ENCODE measurements at regions of chr1 and their contacts with region 1.

Region 1: GRCh38 chr1:155934097-155934935 is at the start of gene KHDC4:
- DNase-seq: peak; percentile 90 to 96
- H3K4me3 ChIP-seq: peak within 1 kb of the TSS; percentile 84
- H3K27ac ChIP-seq: peak within 1 kb of the TSS; percentile 92
- H3K4me1 ChIP-seq: peaks cover 46% of the 10 kb centered on the region
- H3K27me3 ChIP-seq: no peaks in the 10 kb centered on the region
- CTCF ChIP-seq: no peak
- total RNA-seq, gene KHDC4: 63.4 and 68.8 TPM in 2 replicates

Region 2: DNA sequence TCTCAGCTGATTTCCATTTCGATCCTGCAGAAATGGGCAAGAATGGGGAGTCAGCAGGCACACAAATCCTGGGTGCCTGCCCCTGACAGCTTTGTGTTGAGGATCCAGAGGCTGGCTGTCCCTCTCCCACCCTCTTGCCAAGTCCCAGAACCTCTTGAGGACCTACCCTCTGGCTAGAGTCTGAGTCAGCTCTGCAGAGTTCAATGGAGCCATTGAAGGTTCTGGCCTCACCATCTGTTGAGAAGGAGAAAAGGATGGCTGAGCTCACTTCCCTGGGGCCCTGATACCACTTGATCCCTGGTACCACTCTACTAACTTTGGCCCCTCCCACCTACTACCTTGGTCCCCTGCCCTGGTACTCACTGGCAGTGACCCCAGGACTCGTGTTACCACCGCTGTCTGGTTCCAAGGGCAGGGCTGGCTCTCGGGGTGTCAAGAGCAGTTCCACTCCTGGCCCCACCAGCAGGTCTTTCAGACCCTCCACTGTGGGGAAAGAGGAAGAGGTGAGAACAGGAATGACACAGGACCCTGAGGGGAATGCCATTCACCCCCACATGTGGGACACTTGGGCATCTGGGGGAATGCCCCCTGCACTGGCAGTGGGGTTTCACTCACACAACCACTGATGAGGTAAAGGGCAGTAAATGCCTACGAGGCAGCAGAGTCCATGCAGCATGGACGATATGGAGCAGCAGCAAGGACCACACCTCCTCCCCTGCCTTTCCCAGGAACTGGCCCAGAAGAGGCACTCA is 17.6 kb after region 1 on chr1:
- CTCF ChIA-PET with region 1: no interaction called
- POLR2A ChIA-PET with region 1: interaction called, 23 read pairs
- intact Hi-C with region 1: no loop called
- DNase-seq: no peak
- H3K4me3 ChIP-seq: no peak overlapping the region
- H3K27ac ChIP-seq: no peak overlapping the region
- H3K4me1 ChIP-seq: no peaks in the 10 kb centered on the region
- H3K27me3 ChIP-seq: no peaks in the 10 kb centered on the region
- CTCF ChIP-seq: no peak

Region 3: DNA sequence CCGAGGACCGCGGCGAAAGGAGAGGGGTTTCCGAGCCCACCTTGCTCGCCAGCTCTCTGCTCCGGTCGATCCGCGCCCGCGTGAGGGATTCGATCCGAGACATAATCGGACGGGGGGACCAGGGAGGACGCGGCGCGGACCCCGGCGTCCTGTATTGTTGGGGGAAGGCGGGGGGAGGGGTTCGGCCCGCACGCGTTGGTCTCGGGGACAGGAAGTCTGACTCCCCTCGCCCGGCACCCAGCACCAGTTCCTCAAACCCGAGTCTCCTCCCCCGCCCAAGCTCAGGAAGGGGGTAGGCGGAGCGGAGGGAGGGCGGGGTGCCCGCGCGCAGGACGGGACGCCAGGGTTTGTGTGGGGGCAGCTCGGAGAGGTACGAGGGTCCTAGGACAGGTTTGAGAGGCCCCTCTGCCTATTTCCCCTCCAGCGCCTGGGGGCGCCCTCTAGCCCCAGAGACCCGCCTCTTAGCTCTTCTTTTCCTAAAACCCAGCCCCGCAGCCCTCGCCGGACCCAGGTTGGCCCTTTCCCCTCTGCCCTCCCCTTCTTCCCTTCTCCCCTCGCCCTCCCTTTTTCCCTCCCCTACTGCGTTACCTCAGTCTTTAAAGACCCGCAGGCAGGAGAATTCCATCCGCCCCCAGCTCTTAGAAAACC is 44.1 kb after region 1 on chr1 and contains the start of gene ARHGEF2:
- CTCF ChIA-PET with region 1: no interaction called
- POLR2A ChIA-PET with region 1: interaction called, 14 read pairs
- intact Hi-C with region 1: no loop called
- DNase-seq: peak; percentile 64 to 70
- H3K4me3 ChIP-seq: peak within 1 kb of the TSS; percentile 93
- H3K27ac ChIP-seq: peak within 1 kb of the TSS; percentile 96
- H3K4me1 ChIP-seq: peaks cover 53% of the 10 kb centered on the region
- H3K27me3 ChIP-seq: no peaks in the 10 kb centered on the region
- CTCF ChIP-seq: no peak; the same call in 1 of the 2 replicates
- total RNA-seq, gene ARHGEF2: 85.0 and 93.9 TPM in 2 replicates

Region 4: GRCh38 chr1:155989242-155990004 is 55.1 kb after region 1 on chr1:
- CTCF ChIA-PET with region 1: interaction called, 7 read pairs
- POLR2A ChIA-PET with region 1: interaction called, 29 read pairs
- intact Hi-C with region 1: loop called (anchors 1 kb)
- DNase-seq: peak in 1 of 2 experiments; percentile 70
- H3K4me3 ChIP-seq: no peak overlapping the region
- H3K27ac ChIP-seq: no peak overlapping the region
- H3K4me1 ChIP-seq: peaks cover 16% of the 10 kb centered on the region
- H3K27me3 ChIP-seq: no peaks in the 10 kb centered on the region
- CTCF ChIP-seq: peak; percentile 96

Region 5: DNA sequence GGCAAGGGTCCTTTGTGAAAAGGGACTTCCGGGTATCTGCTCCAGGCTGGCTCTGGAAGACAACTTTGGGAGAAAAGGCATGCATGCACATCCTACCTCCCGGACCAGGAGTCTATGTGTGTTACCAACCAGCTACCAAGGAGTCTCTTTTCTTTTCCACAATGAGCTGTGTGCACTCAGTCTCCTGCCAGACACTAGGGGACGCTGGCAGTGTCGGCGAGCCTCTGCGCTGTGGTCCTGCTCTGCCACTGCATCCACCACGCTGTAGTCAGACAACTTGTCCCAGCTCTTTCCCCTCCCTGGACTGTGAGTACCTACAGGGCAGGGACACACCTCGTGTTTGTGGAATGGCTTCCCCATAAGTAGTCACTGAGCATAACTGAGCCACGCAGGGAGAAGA is 91.6 kb after region 1 on chr1:
- CTCF ChIA-PET with region 1: interaction called, 12 read pairs
- POLR2A ChIA-PET with region 1: no interaction called
- intact Hi-C with region 1: no loop called
- DNase-seq: no peak
- H3K4me3 ChIP-seq: no peak overlapping the region
- H3K27ac ChIP-seq: no peak overlapping the region
- H3K4me1 ChIP-seq: no peaks in the 10 kb centered on the region
- H3K27me3 ChIP-seq: no peaks in the 10 kb centered on the region
- CTCF ChIP-seq: 0 out of 2 replicates have a peak, but pooled peaks have one; percentile 27

Region 6: DNA sequence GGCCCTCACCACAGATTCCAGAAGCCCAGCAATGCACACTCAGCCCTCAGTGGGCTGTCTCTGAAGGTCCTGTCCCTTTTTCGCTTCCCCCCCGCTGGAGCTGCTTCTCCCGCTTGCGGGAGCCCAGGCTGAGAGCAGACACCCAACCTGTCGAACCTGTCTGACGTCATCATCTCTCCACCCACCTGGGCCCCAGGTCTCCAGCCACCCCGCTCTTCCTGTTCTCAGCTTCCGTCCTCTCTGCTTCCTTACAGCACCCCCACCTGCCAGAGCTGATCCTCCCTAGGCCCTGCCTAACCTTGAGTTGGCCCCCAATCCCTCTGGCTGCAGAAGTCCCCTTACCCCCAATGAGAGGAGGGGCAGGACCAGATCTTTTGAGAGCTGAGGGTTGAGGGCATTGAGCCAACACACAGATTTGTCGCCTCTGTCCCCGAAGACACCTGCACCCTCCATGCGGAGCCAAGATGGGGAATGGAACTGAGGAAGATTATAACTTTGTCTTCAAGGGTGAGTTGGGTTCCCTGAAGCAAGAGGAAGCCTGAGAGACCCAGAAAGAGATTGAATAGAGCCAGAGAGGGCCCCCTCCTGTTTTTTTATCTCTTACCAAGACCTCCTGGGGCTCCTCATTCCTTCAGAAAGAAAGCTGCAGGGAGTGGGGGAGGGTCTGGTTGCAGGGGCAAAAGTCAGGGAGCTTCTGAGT is 126.8 kb after region 1 on chr1 and contains the start of gene RAB25:
- CTCF ChIA-PET with region 1: interaction called, 16 read pairs
- POLR2A ChIA-PET with region 1: no interaction called
- intact Hi-C with region 1: loop called (anchors 1 kb)
- DNase-seq: peak; percentile 90 to 92
- H3K4me3 ChIP-seq: peak within 1 kb of the TSS; percentile 64
- H3K27ac ChIP-seq: peak within 1 kb of the TSS; percentile 61
- H3K4me1 ChIP-seq: peaks cover 18% of the 10 kb centered on the region
- H3K27me3 ChIP-seq: no peaks in the 10 kb centered on the region
- CTCF ChIP-seq: no peak
- total RNA-seq, gene RAB25: 129 and 194 TPM in 2 replicates

Region 7: GRCh38 chr1:156212833-156213643 is 278.7 kb after region 1 on chr1 and contains the start of gene PMF1:
- CTCF ChIA-PET with region 1: no interaction called
- POLR2A ChIA-PET with region 1: no interaction called
- intact Hi-C with region 1: loop called (anchors 10 kb)
- DNase-seq: peak; percentile 90 to 95
- H3K4me3 ChIP-seq: peak within 1 kb of the TSS; percentile 67
- H3K27ac ChIP-seq: peak within 1 kb of the TSS; percentile 82
- H3K4me1 ChIP-seq: peaks cover 22% of the 10 kb centered on the region
- H3K27me3 ChIP-seq: no peaks in the 10 kb centered on the region
- CTCF ChIP-seq: no peak
- total RNA-seq, gene PMF1: 46.0 and 50.2 TPM in 2 replicates

Measured in PC-9 (cell line).